ENCODE measurements at regions of chr2 and their contacts with region 1.

Region 1: GRCh38 chr2:145007093-145007959 is 487.4 kb upstream of the ZEB2 start:
- DNase-seq: peak; percentile 74 to 91 (median 75)
- ATAC-seq: peak; percentile 87 to 97
- H3K4me3 ChIP-seq: no peak overlapping the region
- H3K27ac ChIP-seq: peak overlapping the region; percentile 78
- H3K4me1 ChIP-seq: no peaks in the 10 kb centered on the region
- H3K27me3 ChIP-seq: no peaks in the 10 kb centered on the region

Region 2: GRCh38 chr2:144541396-144541795 is 465.9 kb before region 1 on chr2:
- intact Hi-C with region 1: no loop called
- DNase-seq: no peak
- ATAC-seq: no peak
- H3K4me3 ChIP-seq: no peak overlapping the region
- H3K27ac ChIP-seq: no peak overlapping the region
- H3K4me1 ChIP-seq: no peaks in the 10 kb centered on the region
- H3K27me3 ChIP-seq: no peaks in the 10 kb centered on the region

Region 3: GRCh38 chr2:145066151-145066661 is 58.9 kb after region 1 on chr2:
- intact Hi-C with region 1: loop called in 1 of 4 experiments (anchors 10 kb)
- DNase-seq: peak; percentile 29 to 57 (median 46)
- ATAC-seq: peak; percentile 89 to 90
- H3K4me3 ChIP-seq: no peak overlapping the region
- H3K27ac ChIP-seq: peak overlapping the region; percentile 78
- H3K4me1 ChIP-seq: no peaks in the 10 kb centered on the region
- H3K27me3 ChIP-seq: no peaks in the 10 kb centered on the region